K562 (cell line): ENCODE measurements at regions of chr19 and their contacts with region 1.

Region 1: DNA sequence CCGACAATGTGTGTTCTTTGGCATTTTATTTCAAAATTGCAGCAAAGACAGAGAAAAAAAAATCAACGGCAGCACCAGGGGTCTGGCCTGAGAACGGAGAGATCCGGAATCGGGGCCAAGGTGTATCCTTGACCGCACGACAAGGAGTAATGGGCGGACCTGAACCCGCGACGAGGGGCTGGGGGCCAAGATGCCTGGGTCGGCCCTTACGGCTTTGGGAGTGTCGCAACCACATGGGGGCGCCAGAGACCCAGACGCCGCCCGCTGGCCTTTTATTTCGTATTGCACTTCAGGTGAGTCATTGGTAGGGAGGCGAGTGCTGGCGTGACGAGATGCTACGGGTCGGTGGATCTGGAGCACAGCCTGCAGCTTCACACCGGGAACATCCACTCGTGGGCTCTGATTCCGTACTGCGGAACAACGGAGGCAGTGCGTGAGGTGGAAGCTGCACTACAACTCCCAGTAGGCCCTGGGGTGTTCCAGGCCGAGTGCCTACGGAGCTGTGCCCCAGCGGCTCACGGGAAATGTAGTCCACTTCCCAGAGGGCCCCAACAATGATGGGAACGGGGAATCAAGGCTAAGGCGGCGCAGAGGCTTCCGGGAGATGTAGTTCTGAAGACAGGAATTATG is 15.7 kb downstream of the BCAT2 start:
- DNase-seq: peak; percentile 90 to 95 (median 92)
- ATAC-seq: peak; percentile 99
- H3K4me3 ChIP-seq: peak overlapping the region; percentile 53
- H3K27ac ChIP-seq: peak overlapping the region; percentile 41; the same call in 2 of the 3 replicates
- H3K4me1 ChIP-seq: peaks cover 3 to 24% of the 10 kb centered on the region in 2 experiments; a peak in 4 of 5 replicates
- H3K27me3 ChIP-seq: no peaks in the 10 kb centered on the region
- CTCF ChIP-seq: peak; percentile 91 to 95 (median 94)
- EP300 ChIP-seq: 0 out of 2 replicates have a peak, but pooled peaks have one; percentile 20
- POLR2A ChIP-seq: peak; percentile 60
- RAD21 ChIP-seq: peak; percentile 95 to 96

Region 2: GRCh38 chr19:48806518-48806817 is 11.3 kb after region 1 on chr19:
- CTCF ChIA-PET with region 1: no interaction called
- POLR2A ChIA-PET with region 1: interaction called, 18 read pairs
- in situ Hi-C with region 1: no loop called
- intact Hi-C with region 1: no loop called
- DNase-seq: peak; percentile 4 to 79 (median 58)
- ATAC-seq: no peak
- H3K4me3 ChIP-seq: no peak overlapping the region
- H3K27ac ChIP-seq: peak overlapping the region; percentile 72; the same call in 2 of the 3 replicates
- H3K4me1 ChIP-seq: peaks cover 24 to 45% of the 10 kb centered on the region in 2 experiments
- H3K27me3 ChIP-seq: no peaks in the 10 kb centered on the region
- CTCF ChIP-seq: no peak
- EP300 ChIP-seq: no peak
- POLR2A ChIP-seq: no peak
- RAD21 ChIP-seq: no peak

Region 3: DNA sequence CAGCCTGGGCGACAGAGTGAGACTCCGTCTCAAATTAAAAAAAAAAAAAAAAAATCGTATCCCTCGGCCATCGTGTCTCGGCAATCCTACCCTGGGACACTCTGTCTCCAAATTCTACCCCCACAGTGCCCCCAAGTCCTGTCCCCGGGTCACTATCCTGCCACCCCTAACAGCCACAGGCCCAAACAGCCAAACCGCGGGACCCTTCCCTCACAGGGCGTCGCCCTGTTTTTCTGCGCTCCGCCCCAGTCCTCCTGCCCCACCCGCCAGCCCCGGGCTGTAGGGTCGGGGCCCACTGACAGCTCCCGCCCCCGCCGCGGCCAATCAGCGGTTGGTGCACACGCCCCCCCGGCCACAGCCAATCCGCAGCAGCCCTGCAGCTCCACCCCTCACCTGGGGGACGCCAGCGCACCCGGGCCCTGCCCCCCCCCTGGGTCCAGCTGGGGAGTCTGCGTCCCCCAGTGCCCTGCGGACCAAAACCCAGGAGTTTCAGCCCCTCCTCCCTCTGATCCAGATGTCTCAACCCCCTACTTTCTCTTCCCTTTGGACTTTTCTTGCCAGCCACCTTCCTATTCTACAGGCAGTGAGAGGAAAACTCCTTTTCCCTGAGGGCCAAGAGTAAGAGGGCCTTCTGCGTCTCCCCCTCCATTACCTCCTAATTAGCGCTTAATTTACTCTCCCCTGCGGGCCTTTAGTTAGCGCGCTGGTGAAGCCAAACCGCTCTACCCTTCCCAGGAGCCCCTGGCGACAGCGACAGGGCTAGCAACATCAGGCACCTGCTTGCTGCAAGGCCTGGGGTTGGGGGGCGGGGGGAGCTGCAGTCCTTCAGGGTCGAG is 17.1 kb after region 1 on chr19:
- CTCF ChIA-PET with region 1: no interaction called
- POLR2A ChIA-PET with region 1: interaction called, 18 read pairs
- in situ Hi-C with region 1: no loop called
- intact Hi-C with region 1: no loop called
- DNase-seq: peak; percentile 95 to 99 (median 99)
- ATAC-seq: peak; percentile 89
- H3K4me3 ChIP-seq: peak overlapping the region; percentile 66
- H3K27ac ChIP-seq: peak overlapping the region; percentile 72
- H3K4me1 ChIP-seq: peaks cover 28 to 54% of the 10 kb centered on the region in 2 experiments
- H3K27me3 ChIP-seq: no peaks in the 10 kb centered on the region
- CTCF ChIP-seq: peak in 1 of 3 experiments; percentile 17; a peak in 1 of 6 replicates
- EP300 ChIP-seq: no peak
- POLR2A ChIP-seq: peak; percentile 78
- RAD21 ChIP-seq: no peak

Region 4: DNA sequence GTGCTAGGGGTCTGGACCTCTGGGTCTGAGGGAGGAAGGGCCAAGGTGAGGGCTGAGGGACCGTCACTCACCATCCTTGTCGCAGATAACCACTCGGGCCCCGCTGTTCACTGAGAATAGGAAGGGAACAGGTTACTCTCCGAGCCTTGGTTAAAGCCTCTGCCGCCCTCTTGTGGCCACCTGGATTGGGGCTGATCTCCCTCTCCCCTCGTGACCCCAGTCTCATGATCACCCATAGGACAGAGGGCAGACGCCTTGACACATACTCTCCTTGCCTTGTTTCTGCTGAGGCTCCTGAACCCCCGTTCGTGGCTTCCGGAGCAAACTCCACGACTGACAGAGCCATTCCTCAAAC is 40.5 kb after region 1 on chr19:
- CTCF ChIA-PET with region 1: interaction called, 28 read pairs
- POLR2A ChIA-PET with region 1: interaction called, 3 read pairs
- in situ Hi-C with region 1: loop called (anchors 5 kb)
- intact Hi-C with region 1: loop called (anchors 1 kb)
- DNase-seq: peak; percentile 86 to 95 (median 88)
- ATAC-seq: peak; percentile 100
- H3K4me3 ChIP-seq: no peak overlapping the region
- H3K27ac ChIP-seq: peak overlapping the region; percentile 82
- H3K4me1 ChIP-seq: peaks cover 11 to 35% of the 10 kb centered on the region in 2 experiments
- H3K27me3 ChIP-seq: no peaks in the 10 kb centered on the region
- CTCF ChIP-seq: peak; percentile 94 to 97 (median 96)
- EP300 ChIP-seq: peak; percentile 37; the same call in 1 of the 2 replicates
- POLR2A ChIP-seq: no peak
- RAD21 ChIP-seq: peak; percentile 87 to 96

Region 5: GRCh38 chr19:48842789-48843162 is 47.6 kb after region 1 on chr19:
- CTCF ChIA-PET with region 1: interaction called, 12 read pairs
- POLR2A ChIA-PET with region 1: interaction called, 5 read pairs
- in situ Hi-C with region 1: loop called (anchors 5 kb)
- intact Hi-C with region 1: no loop called
- DNase-seq: peak; percentile 53 to 80 (median 64)
- ATAC-seq: peak; percentile 87
- H3K4me3 ChIP-seq: no peak overlapping the region
- H3K27ac ChIP-seq: no peak overlapping the region
- H3K4me1 ChIP-seq: peaks cover 6 to 11% of the 10 kb centered on the region in 2 experiments; a peak in 4 of 5 replicates
- H3K27me3 ChIP-seq: no peaks in the 10 kb centered on the region
- CTCF ChIP-seq: peak; percentile 73 to 90 (median 79)
- EP300 ChIP-seq: no peak
- POLR2A ChIP-seq: no peak
- RAD21 ChIP-seq: peak; percentile 64 to 78

Region 6: DNA sequence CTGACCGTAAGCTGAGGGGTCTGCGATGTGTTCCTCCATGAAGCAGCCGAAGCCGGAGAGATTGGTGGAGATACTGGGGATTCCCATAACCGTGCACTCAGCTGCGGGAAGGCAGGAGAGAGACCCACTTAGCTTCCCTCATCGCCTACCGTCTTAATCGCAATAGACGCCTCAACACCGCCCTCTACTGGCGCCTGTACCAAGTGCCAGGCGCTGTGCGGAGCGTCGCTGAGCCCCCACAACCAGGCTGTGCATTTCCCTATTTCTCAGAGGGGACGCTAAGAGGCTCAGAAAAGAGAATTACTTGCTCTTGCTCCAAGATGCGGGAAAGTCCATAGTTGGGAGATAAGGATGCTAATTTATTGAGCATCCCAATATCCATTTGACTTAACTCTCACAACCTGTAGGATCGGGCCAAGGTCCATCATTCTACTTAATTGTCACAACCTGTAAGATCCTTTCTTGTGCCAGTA is 175.8 kb after region 1 on chr19:
- CTCF ChIA-PET with region 1: interaction called, 36 read pairs
- POLR2A ChIA-PET with region 1: interaction called, 13 read pairs
- in situ Hi-C with region 1: loop called (anchors 5 kb)
- intact Hi-C with region 1: loop called (anchors 2 kb)
- DNase-seq: peak; percentile 75 to 93 (median 80)
- ATAC-seq: peak; percentile 66
- H3K4me3 ChIP-seq: no peak overlapping the region
- H3K27ac ChIP-seq: peak overlapping the region; percentile 42; the same call in 2 of the 3 replicates
- H3K4me1 ChIP-seq: peaks cover 26 to 34% of the 10 kb centered on the region in 2 experiments
- H3K27me3 ChIP-seq: no peaks in the 10 kb centered on the region
- CTCF ChIP-seq: peak; percentile 94 to 98 (median 97)
- EP300 ChIP-seq: no peak
- POLR2A ChIP-seq: no peak
- RAD21 ChIP-seq: peak; percentile 92 to 96

Region 7: GRCh38 chr19:49224856-49225255 is 429.7 kb after region 1 on chr19:
- CTCF ChIA-PET with region 1: no interaction called
- POLR2A ChIA-PET with region 1: no interaction called
- in situ Hi-C with region 1: loop called (anchors 10 kb)
- intact Hi-C with region 1: no loop called
- DNase-seq: peak; percentile 52 to 73 (median 57)
- ATAC-seq: peak; percentile 89
- H3K4me3 ChIP-seq: no peak overlapping the region
- H3K27ac ChIP-seq: no peak overlapping the region
- H3K4me1 ChIP-seq: peaks cover 4% of the 10 kb centered on the region in 2 experiments; a peak in 2 of 5 replicates
- H3K27me3 ChIP-seq: no peaks in the 10 kb centered on the region; a peak in 1 of 5 replicates
- CTCF ChIP-seq: peak; percentile 76 to 83 (median 77)
- EP300 ChIP-seq: no peak
- POLR2A ChIP-seq: no peak
- RAD21 ChIP-seq: peak; percentile 58 to 86